ENCODE measurements at regions of chr3 and their contacts with region 1.

Region 1: GRCh38 chr3:14791343-14791945 is 27.3 kb upstream of the FGD5 start:
- DNase-seq: peak; percentile 79
- H3K4me3 Mint-ChIP-seq: no peak overlapping the region
- H3K27ac Mint-ChIP-seq: no peak overlapping the region
- H3K4me1 Mint-ChIP-seq: no peaks in the 10 kb centered on the region
- H3K27me3 Mint-ChIP-seq: peaks cover 9% of the 10 kb centered on the region

Region 2: DNA sequence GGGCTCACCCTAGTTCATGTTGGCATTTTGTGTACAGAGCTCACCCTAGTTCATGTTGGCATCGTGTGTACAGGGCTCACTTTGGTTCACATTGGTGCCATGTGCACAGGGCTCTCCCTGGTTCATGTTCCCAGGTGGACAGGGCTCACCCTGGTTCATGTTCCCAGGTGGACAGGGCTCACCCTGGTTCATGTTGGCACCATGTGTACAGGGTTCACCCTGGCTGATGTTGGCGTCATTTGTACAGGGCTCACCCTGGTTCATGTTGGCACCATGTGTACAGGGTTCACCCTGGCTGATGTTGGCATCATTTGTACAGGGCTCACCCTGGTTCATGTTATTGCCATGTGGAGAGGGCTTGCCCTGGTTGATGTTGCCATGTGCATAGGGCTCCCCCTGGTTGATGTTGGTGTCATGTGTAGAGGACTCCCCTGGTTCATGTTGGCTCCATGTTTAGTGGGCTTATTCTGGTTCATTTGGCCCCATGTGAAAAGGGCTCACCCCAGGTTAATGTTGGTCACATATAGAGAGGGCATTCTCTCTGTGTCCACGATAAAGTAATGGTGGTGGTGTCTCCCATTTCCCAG is 124.3 kb after region 1 on chr3:
- CTCF ChIA-PET with region 1: interaction called, 16 read pairs
- intact Hi-C with region 1: loop called (anchors 1 kb)
- DNase-seq: peak; percentile 45
- H3K4me3 Mint-ChIP-seq: no peak overlapping the region
- H3K27ac Mint-ChIP-seq: no peak overlapping the region
- H3K4me1 Mint-ChIP-seq: no peaks in the 10 kb centered on the region
- H3K27me3 Mint-ChIP-seq: no peaks in the 10 kb centered on the region